CD4-positive, alpha-beta memory T cell (primary cell): ENCODE measurements at regions of chr12 and their contacts with region 1.

Region 1: GRCh38 chr12:99043319-99043914 is 398.3 kb downstream of the APAF1 start:
- DNase-seq: peak in 4 of 5 donors; percentile 8 to 19 (median 13)
- H3K4me3 ChIP-seq: no peak overlapping the region
- H3K4me3 Mint-ChIP-seq: no peak overlapping the region
- H3K27ac ChIP-seq: no peak overlapping the region
- H3K27ac Mint-ChIP-seq: no peak overlapping the region
- H3K4me1 ChIP-seq: no peaks in the 10 kb centered on the region
- H3K4me1 Mint-ChIP-seq: no peaks in the 10 kb centered on the region
- H3K27me3 ChIP-seq: peaks cover 9% of the 10 kb centered on the region
- H3K27me3 Mint-ChIP-seq: peaks cover 0 to 8% of the 10 kb centered on the region in 2 donors

Region 2: GRCh38 chr12:99053616-99054362 is 10.4 kb after region 1 on chr12:
- CTCF ChIA-PET with region 1: interaction called, 27 read pairs
- POLR2A ChIA-PET with region 1: no interaction called
- intact Hi-C with region 1: no loop called
- DNase-seq: no peak
- H3K4me3 ChIP-seq: no peak overlapping the region
- H3K4me3 Mint-ChIP-seq: no peak overlapping the region
- H3K27ac ChIP-seq: no peak overlapping the region
- H3K27ac Mint-ChIP-seq: no peak overlapping the region
- H3K4me1 ChIP-seq: no peaks in the 10 kb centered on the region
- H3K4me1 Mint-ChIP-seq: no peaks in the 10 kb centered on the region
- H3K27me3 ChIP-seq: no peaks in the 10 kb centered on the region
- H3K27me3 Mint-ChIP-seq: peaks cover 0 to 1% of the 10 kb centered on the region in 2 donors

Region 3: DNA sequence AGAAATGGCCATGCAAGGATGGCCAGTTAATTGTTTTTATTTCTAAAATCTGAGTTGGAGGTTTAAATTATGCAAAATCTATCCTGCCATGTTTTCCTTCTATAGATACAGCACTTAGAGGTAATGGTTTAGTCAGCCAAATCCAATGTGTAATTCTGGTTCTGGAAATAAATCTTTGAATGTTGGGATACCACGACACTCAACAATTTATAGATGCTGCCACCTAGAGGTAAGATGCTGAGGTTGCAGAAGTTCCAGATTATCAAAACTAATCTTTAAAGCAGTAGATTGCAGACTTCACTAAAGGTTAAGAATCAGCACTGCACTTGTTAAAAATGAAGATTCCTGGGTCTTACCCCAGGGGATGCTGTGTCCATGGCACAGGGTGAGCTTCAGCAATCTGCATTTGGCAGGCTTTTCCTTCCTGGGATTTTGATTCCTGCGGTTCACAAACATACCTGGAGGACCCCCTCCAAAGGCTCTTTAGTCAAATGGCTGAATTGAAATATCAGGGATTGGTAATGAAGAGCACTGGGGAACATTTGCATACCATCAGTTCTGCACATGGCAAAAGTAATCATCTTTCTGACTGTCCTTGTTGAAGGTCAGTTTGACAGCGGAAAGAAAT is 1697.8 kb after region 1 on chr12:
- CTCF ChIA-PET with region 1: no interaction called
- POLR2A ChIA-PET with region 1: no interaction called
- intact Hi-C with region 1: loop called (anchors 10 kb)
- DNase-seq: peak in 2 of 5 donors; percentile 0 to 7
- H3K4me3 ChIP-seq: no peak overlapping the region
- H3K4me3 Mint-ChIP-seq: no peak overlapping the region
- H3K27ac ChIP-seq: no peak overlapping the region
- H3K27ac Mint-ChIP-seq: no peak overlapping the region
- H3K4me1 ChIP-seq: no peaks in the 10 kb centered on the region
- H3K4me1 Mint-ChIP-seq: no peaks in the 10 kb centered on the region
- H3K27me3 ChIP-seq: no peaks in the 10 kb centered on the region
- H3K27me3 Mint-ChIP-seq: peaks cover 0 to 2% of the 10 kb centered on the region in 2 donors